ENCODE measurements at regions of chr10 and their contacts with region 1.

Region 1: GRCh38 chr10:79374312-79375191 is 27.3 kb downstream of the PPIF start:
- DNase-seq: peak; percentile 58
- H3K4me3 ChIP-seq: no peak overlapping the region
- H3K27ac ChIP-seq: no peak overlapping the region
- H3K4me1 ChIP-seq: no peaks in the 10 kb centered on the region
- H3K27me3 ChIP-seq: peaks cover 2 to 5% of the 10 kb centered on the region in 2 experiments
- CTCF ChIP-seq: peak; percentile 90
- POLR2A ChIP-seq: no peak

Region 2: GRCh38 chr10:79400146-79401004 is 25.8 kb after region 1 on chr10:
- CTCF ChIA-PET with region 1: interaction called, 19 read pairs
- POLR2A ChIA-PET with region 1: no interaction called
- dilution Hi-C with region 1: no loop called
- intact Hi-C with region 1: no loop called
- DNase-seq: no peak
- H3K4me3 ChIP-seq: no peak overlapping the region
- H3K27ac ChIP-seq: no peak overlapping the region
- H3K4me1 ChIP-seq: peaks cover 26% of the 10 kb centered on the region
- H3K27me3 ChIP-seq: no peaks in the 10 kb centered on the region
- CTCF ChIP-seq: peak; percentile 75 to 86
- POLR2A ChIP-seq: no peak

Region 3: DNA sequence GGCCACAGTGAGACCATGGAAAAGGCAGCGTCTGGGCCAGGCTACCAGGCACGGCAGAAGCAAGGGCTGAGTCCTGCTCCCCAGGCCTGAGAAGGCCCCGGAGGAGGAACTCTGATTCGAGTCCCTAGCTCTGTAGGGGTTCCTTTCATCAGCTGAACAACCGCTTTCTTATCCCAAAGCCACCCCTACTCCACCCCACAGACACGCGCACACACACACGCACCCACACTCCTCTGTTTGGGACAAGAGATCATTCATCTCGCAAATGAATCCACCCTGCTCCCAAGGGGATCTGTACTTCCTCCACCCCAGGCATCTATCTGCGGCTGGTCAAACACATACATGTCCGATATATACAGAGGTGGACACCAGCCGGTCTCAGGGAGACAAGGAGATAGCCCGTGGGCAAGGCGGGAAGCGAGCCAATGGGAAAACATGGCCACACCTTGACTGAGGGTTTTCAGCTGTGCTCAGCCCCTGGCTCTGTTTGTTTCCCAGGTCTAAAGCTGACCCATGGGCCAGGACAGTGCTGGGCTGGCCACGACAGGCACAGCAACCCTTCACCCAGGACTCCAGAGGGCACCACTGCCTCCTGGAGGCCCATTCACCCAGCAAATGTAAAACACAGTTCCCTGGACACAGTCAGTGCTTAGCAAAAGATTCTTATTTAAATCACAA is 63.6 kb after region 1 on chr10:
- CTCF ChIA-PET with region 1: interaction called, 13 read pairs
- POLR2A ChIA-PET with region 1: no interaction called
- dilution Hi-C with region 1: no loop called
- intact Hi-C with region 1: no loop called
- DNase-seq: no peak
- H3K4me3 ChIP-seq: no peak overlapping the region
- H3K27ac ChIP-seq: no peak overlapping the region
- H3K4me1 ChIP-seq: peaks cover 3% of the 10 kb centered on the region
- H3K27me3 ChIP-seq: no peaks in the 10 kb centered on the region
- CTCF ChIP-seq: no peak
- POLR2A ChIP-seq: no peak

Region 4: GRCh38 chr10:79454259-79454658 is 79.7 kb after region 1 on chr10:
- CTCF ChIA-PET with region 1: interaction called, 60 read pairs
- POLR2A ChIA-PET with region 1: no interaction called
- dilution Hi-C with region 1: no loop called
- intact Hi-C with region 1: no loop called
- DNase-seq: no peak
- H3K4me3 ChIP-seq: no peak overlapping the region
- H3K27ac ChIP-seq: no peak overlapping the region
- H3K4me1 ChIP-seq: no peaks in the 10 kb centered on the region
- H3K27me3 ChIP-seq: peaks cover 19 to 24% of the 10 kb centered on the region in 2 experiments
- CTCF ChIP-seq: no peak
- POLR2A ChIP-seq: no peak

Region 5: GRCh38 chr10:79473496-79474095 is 99.0 kb after region 1 on chr10:
- CTCF ChIA-PET with region 1: interaction called, 139 read pairs
- POLR2A ChIA-PET with region 1: no interaction called
- dilution Hi-C with region 1: no loop called
- intact Hi-C with region 1: no loop called
- DNase-seq: no peak
- H3K4me3 ChIP-seq: no peak overlapping the region
- H3K27ac ChIP-seq: no peak overlapping the region
- H3K4me1 ChIP-seq: no peaks in the 10 kb centered on the region
- H3K27me3 ChIP-seq: peaks cover 14 to 15% of the 10 kb centered on the region in 2 experiments
- CTCF ChIP-seq: no peak
- POLR2A ChIP-seq: no peak

Region 6: GRCh38 chr10:79502561-79503309 is 128.2 kb after region 1 on chr10:
- CTCF ChIA-PET with region 1: interaction called, 10 read pairs
- POLR2A ChIA-PET with region 1: no interaction called
- dilution Hi-C with region 1: no loop called
- intact Hi-C with region 1: no loop called
- DNase-seq: no peak
- H3K4me3 ChIP-seq: no peak overlapping the region
- H3K27ac ChIP-seq: no peak overlapping the region
- H3K4me1 ChIP-seq: no peaks in the 10 kb centered on the region
- H3K27me3 ChIP-seq: peaks cover 3 to 5% of the 10 kb centered on the region in 2 experiments
- CTCF ChIP-seq: no peak
- POLR2A ChIP-seq: no peak

Region 7: GRCh38 chr10:79608505-79609375 is 234.2 kb after region 1 on chr10:
- CTCF ChIA-PET with region 1: interaction called, 3 read pairs
- POLR2A ChIA-PET with region 1: no interaction called
- dilution Hi-C with region 1: no loop called
- intact Hi-C with region 1: loop called (anchors 1 kb)
- DNase-seq: peak; percentile 13
- H3K4me3 ChIP-seq: no peak overlapping the region
- H3K27ac ChIP-seq: no peak overlapping the region
- H3K4me1 ChIP-seq: no peaks in the 10 kb centered on the region
- H3K27me3 ChIP-seq: peaks cover 0 to 3% of the 10 kb centered on the region in 2 experiments
- CTCF ChIP-seq: peak; percentile 68 to 79
- POLR2A ChIP-seq: no peak

Region 8: DNA sequence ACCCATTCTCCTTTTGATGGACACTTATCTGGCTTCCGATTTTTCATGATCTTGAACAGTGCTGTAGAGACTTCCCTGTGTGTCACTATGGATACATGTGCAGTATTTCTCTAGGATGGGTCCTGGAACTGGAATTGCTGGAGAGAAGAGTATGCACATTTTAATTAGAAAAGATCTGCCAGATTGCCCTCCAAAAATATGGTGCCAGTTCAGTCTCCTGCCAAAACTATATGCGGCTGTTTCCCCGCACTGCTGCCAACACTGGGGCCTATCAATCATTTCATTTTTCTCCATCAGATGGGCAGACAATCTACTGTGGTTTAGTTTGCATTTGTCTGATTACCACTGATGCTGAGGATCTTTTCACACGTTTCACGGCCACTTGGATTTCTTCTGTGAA is 1268.1 kb after region 1 on chr10:
- CTCF ChIA-PET with region 1: no interaction called
- POLR2A ChIA-PET with region 1: no interaction called
- dilution Hi-C with region 1: no loop called
- intact Hi-C with region 1: no loop called
- DNase-seq: no peak
- H3K4me3 ChIP-seq: no peak overlapping the region
- H3K27ac ChIP-seq: no peak overlapping the region
- H3K4me1 ChIP-seq: no peaks in the 10 kb centered on the region
- H3K27me3 ChIP-seq: no peaks in the 10 kb centered on the region
- CTCF ChIP-seq: no peak
- POLR2A ChIP-seq: no peak